AG04449 (cell line): ENCODE measurements at regions of chr1 and their contacts with region 1.

Region 1: GRCh38 chr1:91924146-91924545 is 25.1 kb upstream of the BRDT start:
- DNase-seq: peak; percentile 26
- H3K4me3 ChIP-seq: no peak overlapping the region
- CTCF ChIP-seq: no peak

Region 2: GRCh38 chr1:91529856-91530255 is 394.3 kb before region 1 on chr1:
- CTCF ChIA-PET with region 1: interaction called, 102 read pairs
- POLR2A ChIA-PET with region 1: no interaction called
- DNase-seq: no peak
- H3K4me3 ChIP-seq: no peak overlapping the region
- CTCF ChIP-seq: peak; percentile 25